ENCODE measurements at regions of chr4 and their contacts with region 1.

Region 1: DNA sequence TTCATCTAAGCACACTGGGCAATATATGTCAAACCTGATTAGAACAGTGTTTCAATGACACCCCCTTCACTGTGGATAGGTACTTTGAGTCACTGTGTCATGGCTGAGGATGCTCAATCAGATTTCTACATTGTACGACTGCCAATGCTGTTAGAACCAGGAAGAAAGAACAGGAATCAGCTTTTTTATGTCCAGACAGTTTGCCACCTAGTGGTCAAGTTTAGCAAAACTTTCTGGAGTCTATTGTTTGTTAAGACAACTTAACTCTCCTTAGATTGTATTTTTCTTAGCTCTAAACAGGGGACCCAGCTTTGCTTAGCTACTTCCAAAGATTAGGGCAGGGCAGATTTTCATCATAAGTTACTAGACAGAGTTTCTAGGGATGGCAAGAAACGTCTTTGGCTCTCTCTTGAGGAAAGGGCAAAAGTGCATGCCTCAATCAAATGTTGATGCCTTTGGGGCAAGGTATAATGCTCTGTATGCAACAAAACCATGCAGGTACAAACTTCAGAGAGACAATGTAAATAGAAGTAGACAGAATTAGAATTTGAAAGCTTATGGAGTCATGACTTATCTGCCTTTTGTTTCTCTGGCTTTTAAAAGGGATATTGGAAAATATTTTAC is 40.5 kb upstream of the BMP3 start:
- DNase-seq: no peak
- H3K4me3 ChIP-seq: no peak overlapping the region
- H3K27ac ChIP-seq: no peak overlapping the region
- H3K4me1 ChIP-seq: peaks cover 0 to 11% (median 0%) of the 10 kb centered on the region in 4 donors
- H3K27me3 ChIP-seq: no peaks in the 10 kb centered on the region
- CTCF ChIP-seq: peak; percentile 35 to 67 (median 52)
- EP300 ChIP-seq: no peak
- POLR2A ChIP-seq: no peak

Region 2: GRCh38 chr4:80610845-80611677 is 379.0 kb before region 1 on chr4:
- intact Hi-C with region 1: loop called (anchors 10 kb)
- DNase-seq: no peak
- H3K4me3 ChIP-seq: no peak overlapping the region
- H3K27ac ChIP-seq: no peak overlapping the region
- H3K4me1 ChIP-seq: peaks cover 0 to 28% (median 8%) of the 10 kb centered on the region in 4 donors
- H3K27me3 ChIP-seq: no peaks in the 10 kb centered on the region
- CTCF ChIP-seq: no peak
- EP300 ChIP-seq: no peak
- POLR2A ChIP-seq: no peak

Region 3: DNA sequence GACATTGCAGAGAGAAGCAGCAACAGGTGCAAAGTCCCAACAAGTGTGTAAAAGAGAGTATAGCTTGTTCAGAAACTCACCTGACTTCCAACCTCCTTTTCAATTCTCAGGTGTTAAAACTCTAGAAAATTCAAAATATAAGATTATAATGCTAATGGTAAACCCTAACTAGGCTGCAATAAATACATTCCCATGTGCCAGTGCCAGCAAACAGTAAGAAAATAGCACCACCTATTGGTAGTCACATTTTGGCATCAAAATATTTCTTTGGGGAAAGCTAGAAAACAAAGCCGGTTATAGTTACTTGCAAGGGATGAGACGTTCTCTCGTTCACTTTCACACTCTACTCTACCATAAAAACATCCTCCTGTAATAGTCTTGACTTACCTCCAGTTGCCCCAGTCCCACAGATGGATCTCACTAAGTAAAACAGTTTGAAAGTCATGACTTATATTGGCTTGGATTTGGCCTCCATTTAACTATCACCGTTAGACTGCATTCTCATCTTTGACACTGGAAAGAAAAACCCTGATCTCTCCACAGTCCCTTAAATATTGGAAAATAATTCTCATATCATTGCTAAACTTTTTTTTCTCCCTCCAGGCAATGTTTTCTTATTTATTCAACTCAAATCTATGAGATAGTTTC is 50.1 kb after region 1 on chr4:
- intact Hi-C with region 1: loop called (anchors 5 kb)
- DNase-seq: no peak
- H3K4me3 ChIP-seq: no peak overlapping the region
- H3K27ac ChIP-seq: peak overlapping the region in 3 of 4 donors; percentile 41 to 53 (median 52)
- H3K4me1 ChIP-seq: peaks cover 0 to 66% (median 22%) of the 10 kb centered on the region in 4 donors
- H3K27me3 ChIP-seq: no peaks in the 10 kb centered on the region
- CTCF ChIP-seq: peak in 3 of 4 experiments; percentile 23 to 64 (median 55)
- EP300 ChIP-seq: no peak
- POLR2A ChIP-seq: no peak